ENCODE measurements at regions of chr2 and their contacts with region 1.

Region 1: DNA sequence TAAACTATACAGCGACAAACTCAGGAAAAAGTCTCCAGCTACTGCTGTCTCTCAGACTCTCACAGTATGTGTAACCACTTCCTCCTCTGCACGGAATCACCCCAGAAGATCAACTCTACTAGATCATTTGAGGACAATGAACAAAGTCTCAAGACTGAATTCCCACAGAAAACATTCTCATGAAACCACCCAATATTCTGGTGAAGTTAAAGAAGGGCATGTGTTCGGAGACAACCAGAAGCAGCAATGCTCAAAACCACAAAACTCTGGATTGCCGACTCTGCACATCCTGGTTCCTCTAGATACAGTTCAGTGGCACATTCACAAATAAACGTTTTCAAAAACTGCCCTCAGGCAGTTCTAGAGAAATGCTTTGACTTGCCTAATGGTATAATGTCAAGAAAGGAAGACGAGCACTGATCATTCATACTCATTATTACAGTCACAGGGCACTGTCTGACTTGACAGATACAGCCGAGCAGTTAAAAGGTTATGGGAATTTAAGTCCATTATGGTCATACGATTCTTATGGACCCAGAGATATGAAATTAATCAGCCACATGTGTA is 91.9 kb upstream of the STK17B start:
- DNase-seq: peak in 30 of 35 experiments; percentile 3 to 84 (median 48)
- ATAC-seq: peak; percentile 83 to 89 (median 88)
- H3K4me3 ChIP-seq: peak overlapping the region in 1 of 2 donors; percentile 38
- H3K4me3 Mint-ChIP-seq: peak overlapping the region; percentile 61 to 73 (median 71)
- H3K27ac ChIP-seq: peak overlapping the region; percentile 80
- H3K27ac Mint-ChIP-seq: peak overlapping the region; percentile 98
- H3K4me1 ChIP-seq: peaks cover 43 to 80% of the 10 kb centered on the region in 2 experiments
- H3K4me1 Mint-ChIP-seq: peaks cover 81 to 86% (median 82%) of the 10 kb centered on the region in 3 donors
- H3K27me3 ChIP-seq: no peaks in the 10 kb centered on the region
- H3K27me3 Mint-ChIP-seq: no peaks in the 10 kb centered on the region

Region 2: GRCh38 chr2:196182439-196183171 is 80.7 kb before region 1 on chr2:
- CTCF ChIA-PET with region 1: interaction called, 4 to 10 read pairs
- POLR2A ChIA-PET with region 1: interaction called in 1 of 2 experiments, 7 read pairs
- DNase-seq: peak in 1 of 35 experiments; percentile 63
- ATAC-seq: peak in 3 of 4 experiments; percentile 21 to 33 (median 30)
- H3K4me3 ChIP-seq: no peak overlapping the region
- H3K4me3 Mint-ChIP-seq: peak overlapping the region; percentile 14 to 75 (median 64)
- H3K27ac ChIP-seq: peak overlapping the region; percentile 94
- H3K27ac Mint-ChIP-seq: peak overlapping the region; percentile 93 to 100
- H3K4me1 ChIP-seq: peaks cover 65 to 66% of the 10 kb centered on the region in 2 experiments
- H3K4me1 Mint-ChIP-seq: peaks cover 86 to 91% (median 88%) of the 10 kb centered on the region in 3 donors
- H3K27me3 ChIP-seq: no peaks in the 10 kb centered on the region
- H3K27me3 Mint-ChIP-seq: no peaks in the 10 kb centered on the region

Region 3: DNA sequence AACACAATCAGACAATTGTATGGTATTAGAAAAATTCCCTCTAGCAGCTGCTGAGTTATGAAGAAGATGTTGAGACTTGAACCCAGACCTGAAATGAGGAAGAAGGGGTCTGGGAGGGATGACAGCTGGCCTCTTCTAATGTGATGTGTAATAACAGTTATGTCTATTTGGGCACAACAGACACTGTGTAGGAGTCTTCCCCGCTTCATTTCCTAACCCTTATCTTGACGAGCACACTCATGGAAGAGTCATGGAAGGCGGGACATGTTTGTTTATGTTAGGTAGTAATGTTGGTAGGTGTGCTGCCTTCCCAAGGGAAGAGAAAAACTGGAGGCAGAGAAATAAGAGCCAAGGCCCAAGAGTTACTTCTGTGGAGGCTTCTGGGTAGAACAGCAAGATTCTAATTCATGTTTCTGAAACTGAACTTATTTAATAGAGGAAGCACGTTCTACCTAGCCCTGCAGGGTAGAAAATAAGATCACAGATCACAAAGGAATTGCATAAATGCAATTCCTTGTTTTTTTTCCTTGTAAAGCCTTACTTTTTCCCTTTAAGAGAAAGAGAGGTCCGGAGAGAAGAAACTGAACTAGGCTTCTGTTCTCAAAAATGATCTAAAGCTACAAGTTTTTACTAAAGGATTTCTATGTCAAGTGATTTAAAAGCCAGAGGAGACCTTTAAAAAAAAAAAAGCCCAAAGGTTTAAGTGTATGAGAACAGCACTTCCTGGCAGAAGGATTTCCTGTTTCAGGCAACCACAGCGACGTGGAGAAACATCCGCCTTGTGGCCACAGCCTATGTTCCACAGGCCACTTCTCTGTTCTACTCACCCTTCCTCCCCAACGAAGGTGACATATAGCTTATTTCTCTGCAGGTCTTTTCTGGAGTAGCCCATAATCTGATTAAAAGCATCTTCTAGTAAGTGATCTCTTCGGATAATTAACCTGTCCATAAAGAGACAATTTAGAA is 23.4 kb before region 1 on chr2:
- CTCF ChIA-PET with region 1: interaction called, 3 to 15 read pairs
- POLR2A ChIA-PET with region 1: interaction called, 3 to 4 read pairs
- DNase-seq: peak; percentile 41 to 90 (median 80)
- ATAC-seq: peak; percentile 86 to 94 (median 90)
- H3K4me3 ChIP-seq: peak overlapping the region; percentile 8 to 16
- H3K4me3 Mint-ChIP-seq: peak overlapping the region; percentile 67 to 75 (median 73)
- H3K27ac ChIP-seq: peak overlapping the region; percentile 85
- H3K27ac Mint-ChIP-seq: peak overlapping the region; percentile 95 to 98
- H3K4me1 ChIP-seq: peaks cover 57 to 63% of the 10 kb centered on the region in 2 experiments
- H3K4me1 Mint-ChIP-seq: peaks cover 82 to 88% (median 87%) of the 10 kb centered on the region in 3 donors
- H3K27me3 ChIP-seq: no peaks in the 10 kb centered on the region
- H3K27me3 Mint-ChIP-seq: no peaks in the 10 kb centered on the region

Measured in T-cell (primary cell).